GM12878 (cell line): ENCODE measurements at regions of chr12 and their contacts with region 1.

Region 1: DNA sequence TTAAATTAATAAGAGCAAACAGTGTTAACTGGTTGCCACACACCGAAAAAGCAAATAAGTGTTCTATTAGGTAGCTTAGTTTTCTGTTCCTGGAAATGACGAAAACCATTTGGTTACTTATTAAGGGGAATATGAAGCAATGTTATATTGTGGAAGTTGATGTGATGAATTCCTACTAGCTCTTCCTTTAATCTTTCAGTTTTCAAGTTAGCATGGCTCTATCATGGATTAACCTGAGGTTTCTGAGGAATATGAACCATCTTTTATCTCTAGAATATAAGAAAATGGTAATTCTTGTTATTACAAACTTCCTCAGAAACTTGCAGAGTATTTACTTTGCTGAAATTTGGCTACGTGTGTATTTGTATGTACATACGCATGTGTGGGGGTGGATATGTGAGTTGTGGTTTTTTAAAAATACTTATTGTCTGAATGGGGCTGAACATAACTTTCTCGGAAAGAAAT is 245.7 kb downstream of the KCNC2 start:
- DNase-seq: no peak
- ATAC-seq: peak; percentile 86
- H3K4me3 ChIP-seq: no peak overlapping the region
- H3K27ac ChIP-seq: no peak overlapping the region
- H3K4me1 ChIP-seq: no peaks in the 10 kb centered on the region
- H3K27me3 ChIP-seq: no peaks in the 10 kb centered on the region
- CTCF ChIP-seq: no peak
- EP300 ChIP-seq: peak in 1 of 2 experiments; percentile 43; a peak in 2 of 4 replicates
- POLR2A ChIP-seq: no peak
- RAD21 ChIP-seq: no peak

Region 2: DNA sequence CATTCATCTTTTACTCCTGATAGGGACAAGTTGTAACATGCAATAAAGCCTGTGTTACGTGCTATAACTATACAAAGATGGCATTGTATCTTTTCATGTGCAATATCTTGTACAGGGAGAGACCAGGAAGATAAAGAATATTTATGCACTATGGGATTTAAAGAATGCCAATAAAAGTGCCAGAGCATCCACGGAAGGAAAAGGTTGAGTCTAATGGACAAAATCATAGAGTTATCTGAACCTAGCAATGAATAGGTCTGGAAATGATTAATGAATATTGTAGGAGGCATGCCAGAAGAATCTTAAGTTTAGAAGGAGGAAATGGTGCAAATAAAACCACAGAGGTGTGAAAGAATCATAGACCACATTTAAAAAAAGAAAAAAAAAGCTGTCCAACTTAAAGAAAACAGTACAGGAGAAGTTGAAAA is 18.1 kb before region 1 on chr12:
- CTCF ChIA-PET with region 1: interaction called, 4 read pairs
- POLR2A ChIA-PET with region 1: no interaction called
- RAD21 ChIA-PET with region 1: interaction called, 3 read pairs
- SMC1A ChIA-PET with region 1: interaction called, 16 read pairs
- in situ Hi-C with region 1: no loop called
- intact Hi-C with region 1: no loop called
- DNase-seq: no peak
- ATAC-seq: peak; percentile 77
- H3K4me3 ChIP-seq: no peak overlapping the region
- H3K27ac ChIP-seq: no peak overlapping the region
- H3K4me1 ChIP-seq: no peaks in the 10 kb centered on the region
- H3K27me3 ChIP-seq: no peaks in the 10 kb centered on the region
- CTCF ChIP-seq: no peak
- EP300 ChIP-seq: peak in 1 of 2 experiments; percentile 20; a peak in 1 of 4 replicates
- POLR2A ChIP-seq: no peak
- RAD21 ChIP-seq: no peak

Region 3: GRCh38 chr12:74985986-74986319 is 22.1 kb after region 1 on chr12:
- CTCF ChIA-PET with region 1: interaction called, 3 read pairs
- POLR2A ChIA-PET with region 1: no interaction called
- RAD21 ChIA-PET with region 1: interaction called, 4 read pairs
- SMC1A ChIA-PET with region 1: interaction called, 16 read pairs
- in situ Hi-C with region 1: no loop called
- intact Hi-C with region 1: no loop called
- DNase-seq: no peak
- ATAC-seq: no peak
- H3K4me3 ChIP-seq: no peak overlapping the region
- H3K27ac ChIP-seq: no peak overlapping the region
- H3K4me1 ChIP-seq: no peaks in the 10 kb centered on the region
- H3K27me3 ChIP-seq: no peaks in the 10 kb centered on the region
- CTCF ChIP-seq: no peak
- EP300 ChIP-seq: no peak
- POLR2A ChIP-seq: no peak
- RAD21 ChIP-seq: no peak

Region 4: DNA sequence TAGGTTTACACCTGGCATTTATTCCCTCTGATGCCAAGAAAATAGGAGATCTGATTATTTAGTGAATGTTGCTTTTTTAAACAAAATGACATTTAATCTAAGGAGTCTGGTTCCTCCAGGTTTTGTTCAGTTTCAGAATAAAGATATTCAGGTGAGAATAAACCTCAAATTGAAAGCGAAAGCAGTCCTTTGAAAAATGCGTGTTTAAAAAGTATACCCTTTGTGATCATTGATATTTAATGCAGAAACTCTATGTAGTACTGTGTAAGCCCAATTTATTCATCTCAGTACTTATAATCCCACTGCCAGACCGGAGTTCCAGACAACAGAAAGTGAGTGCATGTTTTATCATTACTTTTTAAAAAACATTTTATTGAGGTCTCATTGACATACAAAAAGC is 35.6 kb after region 1 on chr12:
- CTCF ChIA-PET with region 1: no interaction called
- POLR2A ChIA-PET with region 1: no interaction called
- RAD21 ChIA-PET with region 1: no interaction called
- SMC1A ChIA-PET with region 1: interaction called, 10 read pairs
- in situ Hi-C with region 1: no loop called
- intact Hi-C with region 1: no loop called
- DNase-seq: no peak
- ATAC-seq: peak; percentile 63
- H3K4me3 ChIP-seq: no peak overlapping the region
- H3K27ac ChIP-seq: no peak overlapping the region
- H3K4me1 ChIP-seq: no peaks in the 10 kb centered on the region
- H3K27me3 ChIP-seq: no peaks in the 10 kb centered on the region
- CTCF ChIP-seq: no peak
- EP300 ChIP-seq: no peak
- POLR2A ChIP-seq: no peak
- RAD21 ChIP-seq: no peak

Region 5: GRCh38 chr12:75437564-75437963 is 473.7 kb after region 1 on chr12:
- CTCF ChIA-PET with region 1: no interaction called
- POLR2A ChIA-PET with region 1: no interaction called
- RAD21 ChIA-PET with region 1: no interaction called
- SMC1A ChIA-PET with region 1: no interaction called
- in situ Hi-C with region 1: no loop called
- intact Hi-C with region 1: no loop called
- DNase-seq: no peak
- ATAC-seq: peak; percentile 93
- H3K4me3 ChIP-seq: no peak overlapping the region
- H3K27ac ChIP-seq: no peak overlapping the region
- H3K4me1 ChIP-seq: no peaks in the 10 kb centered on the region
- H3K27me3 ChIP-seq: no peaks in the 10 kb centered on the region
- CTCF ChIP-seq: peak; percentile 35 to 42 (median 41); a peak in 3 of 6 replicates
- EP300 ChIP-seq: no peak
- POLR2A ChIP-seq: no peak
- RAD21 ChIP-seq: peak; percentile 48

Region 6: GRCh38 chr12:75553398-75553797 is 589.5 kb after region 1 on chr12:
- CTCF ChIA-PET with region 1: no interaction called
- POLR2A ChIA-PET with region 1: no interaction called
- RAD21 ChIA-PET with region 1: no interaction called
- SMC1A ChIA-PET with region 1: no interaction called
- in situ Hi-C with region 1: no loop called
- intact Hi-C with region 1: no loop called
- DNase-seq: no peak
- ATAC-seq: peak; percentile 44
- H3K4me3 ChIP-seq: no peak overlapping the region
- H3K27ac ChIP-seq: no peak overlapping the region
- H3K4me1 ChIP-seq: no peaks in the 10 kb centered on the region
- H3K27me3 ChIP-seq: no peaks in the 10 kb centered on the region
- CTCF ChIP-seq: no peak
- EP300 ChIP-seq: no peak
- POLR2A ChIP-seq: no peak
- RAD21 ChIP-seq: no peak